ENCODE measurements at regions of chr9 and their contacts with region 1.

Region 1: DNA sequence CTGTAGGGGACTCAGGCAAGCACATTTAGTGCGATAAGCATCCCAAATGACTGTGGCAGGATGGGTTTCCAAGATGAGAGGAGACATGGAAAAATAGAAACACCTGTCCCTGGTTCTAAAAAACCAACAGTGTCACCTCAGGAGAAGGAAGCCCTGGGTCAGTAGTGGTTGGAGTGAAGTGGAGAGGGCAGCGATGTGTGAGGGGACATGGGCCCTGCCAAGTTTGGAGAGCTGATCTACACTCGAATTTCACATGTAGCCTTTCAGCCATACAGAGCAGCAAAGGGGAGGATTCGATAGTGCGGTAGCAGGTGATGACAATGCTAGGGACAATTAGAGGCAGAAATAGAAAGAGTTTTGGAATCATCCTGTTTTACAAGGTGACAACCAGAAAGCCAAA is 32.6 kb upstream of the LHX2 start:
- DNase-seq: no peak
- H3K4me3 ChIP-seq: no peak overlapping the region
- H3K27ac ChIP-seq: no peak overlapping the region
- H3K4me1 ChIP-seq: no peaks in the 10 kb centered on the region
- H3K27me3 ChIP-seq: peaks cover 0 to 34% of the 10 kb centered on the region in 2 donors
- CTCF ChIP-seq: no peak

Region 2: DNA sequence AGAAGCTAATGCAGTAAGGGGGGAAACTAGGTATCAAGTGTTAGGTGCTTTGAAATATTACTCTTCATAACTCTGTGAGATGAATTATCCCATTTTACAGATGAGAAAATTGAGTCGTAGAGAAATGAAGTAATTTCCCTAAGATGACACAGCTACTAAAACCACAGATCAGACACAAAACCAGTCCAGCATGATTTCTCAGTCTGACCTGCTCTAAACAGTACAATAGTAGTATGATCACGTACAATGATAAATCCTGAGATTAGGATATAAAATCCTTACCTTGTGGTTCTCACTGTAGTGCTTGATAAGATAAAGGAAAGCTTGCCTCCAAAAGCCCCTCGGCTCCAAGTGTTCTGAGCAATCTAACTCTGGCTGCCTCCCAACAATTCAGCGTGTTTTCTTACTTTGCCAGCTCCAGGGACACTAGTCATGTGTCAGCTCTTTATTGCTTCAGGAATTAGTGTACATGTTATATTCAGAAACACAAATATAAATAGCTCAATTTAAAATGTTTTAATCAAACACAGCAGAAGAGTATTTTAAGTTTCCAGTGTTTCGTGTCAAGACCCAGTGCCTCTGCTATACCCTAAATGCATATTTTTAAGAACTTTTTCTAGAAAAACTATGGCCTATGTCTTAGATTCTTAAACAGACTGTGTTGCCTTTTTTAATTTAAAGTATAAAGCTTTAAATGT is 292.7 kb before region 1 on chr9:
- intact Hi-C with region 1: no loop called
- DNase-seq: no peak
- H3K4me3 ChIP-seq: no peak overlapping the region
- H3K27ac ChIP-seq: no peak overlapping the region
- H3K4me1 ChIP-seq: peaks cover 0 to 7% (median 0%) of the 10 kb centered on the region in 4 donors
- H3K27me3 ChIP-seq: no peaks in the 10 kb centered on the region
- CTCF ChIP-seq: no peak

Region 3: DNA sequence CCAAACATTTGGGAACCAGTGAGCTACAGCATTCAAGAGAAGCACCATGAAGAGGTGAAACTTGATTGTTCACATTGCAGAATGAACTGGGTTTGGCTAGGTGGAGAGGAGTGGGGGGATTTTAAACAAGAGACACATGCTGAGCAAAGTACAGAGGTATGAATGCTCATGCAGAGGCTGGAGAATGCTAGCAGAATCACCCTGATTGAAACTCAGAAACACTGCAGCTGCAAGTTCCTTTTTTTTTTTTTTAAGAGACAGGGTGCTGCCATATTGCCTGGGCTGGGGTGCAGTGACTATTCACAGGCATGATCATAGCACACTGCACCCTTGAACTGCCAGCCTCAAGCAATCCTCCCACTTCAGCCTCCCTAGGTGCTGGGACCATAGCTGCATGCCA is 84.2 kb before region 1 on chr9:
- intact Hi-C with region 1: no loop called
- DNase-seq: no peak
- H3K4me3 ChIP-seq: no peak overlapping the region
- H3K27ac ChIP-seq: no peak overlapping the region
- H3K4me1 ChIP-seq: no peaks in the 10 kb centered on the region
- H3K27me3 ChIP-seq: no peaks in the 10 kb centered on the region
- CTCF ChIP-seq: no peak

Region 4: GRCh38 chr9:123997665-123998277 is 18.8 kb after region 1 on chr9:
- intact Hi-C with region 1: loop called (anchors 2 kb)
- DNase-seq: peak; percentile 51 to 69
- H3K4me3 ChIP-seq: no peak overlapping the region
- H3K27ac ChIP-seq: no peak overlapping the region
- H3K4me1 ChIP-seq: peaks cover 0 to 35% (median 22%) of the 10 kb centered on the region in 4 donors
- H3K27me3 ChIP-seq: peaks cover 0 to 86% of the 10 kb centered on the region in 2 donors
- CTCF ChIP-seq: no peak

Measured in tibial artery (tissue), 4 donors.